Naive thymus-derived CD8-positive, alpha-beta T cell (primary cell): ENCODE measurements at regions of chr11 and their contacts with region 1.

Region 1: GRCh38 chr11:34105079-34105956 is at the start of gene NAT10:
- DNase-seq: peak; percentile 82 to 99 (median 97)
- ATAC-seq: peak; percentile 92 to 93
- H3K4me3 Mint-ChIP-seq: peak within 1 kb of the TSS; percentile 93 to 98 (median 96)
- H3K27ac Mint-ChIP-seq: peak within 1 kb of the TSS; percentile 98 to 99 (median 99)
- H3K4me1 Mint-ChIP-seq: peaks cover 37 to 65% (median 56%) of the 10 kb centered on the region in 4 donors
- H3K27me3 Mint-ChIP-seq: peaks cover 0 to 6% (median 0%) of the 10 kb centered on the region in 5 donors
- polyA plus RNA-seq, gene NAT10: 25.2 to 56.7 (median 41.9) TPM

Region 2: DNA sequence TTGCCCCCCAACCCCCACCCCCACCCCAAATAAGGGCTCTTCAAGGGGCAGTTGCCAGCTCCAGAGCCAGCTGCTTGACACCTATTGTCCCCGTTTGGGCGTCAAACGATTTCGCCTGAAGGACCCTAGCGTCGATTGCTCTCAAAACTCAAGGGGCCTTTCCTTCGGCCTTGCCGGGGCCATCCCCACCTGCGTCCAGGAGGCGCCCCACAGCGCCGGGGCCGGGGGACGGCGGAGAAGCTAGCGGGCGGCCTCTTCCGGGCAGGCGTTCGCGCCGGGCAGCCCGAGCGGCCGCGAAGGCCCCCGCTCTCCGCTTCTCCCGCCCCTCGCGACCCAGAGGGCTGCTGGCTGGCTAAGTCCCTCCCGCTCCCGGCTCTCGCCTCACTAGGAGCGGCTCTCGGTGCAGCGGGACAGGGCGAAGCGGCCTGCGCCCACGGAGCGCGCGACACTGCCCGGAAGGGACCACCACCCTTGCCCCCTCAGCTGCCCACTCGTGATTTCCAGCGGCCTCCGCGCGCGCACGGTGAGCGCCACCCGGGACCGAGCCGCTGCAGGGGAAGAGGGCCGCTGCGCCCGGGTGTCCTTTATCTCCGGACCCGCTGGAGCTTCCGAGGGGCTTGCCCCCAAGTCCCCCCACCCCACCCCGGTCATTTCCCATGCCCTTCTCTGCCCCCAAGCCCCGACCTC is 53.8 kb before region 1 on chr11 and contains the start of gene CAPRIN1:
- POLR2A ChIA-PET with region 1: interaction called, 102 read pairs
- DNase-seq: peak; percentile 71 to 96 (median 84)
- ATAC-seq: peak; percentile 76 to 78
- H3K4me3 Mint-ChIP-seq: peak within 1 kb of the TSS; percentile 94 to 99 (median 98)
- H3K27ac Mint-ChIP-seq: peak within 1 kb of the TSS; percentile 95 to 99 (median 98)
- H3K4me1 Mint-ChIP-seq: peaks cover 9 to 40% (median 25%) of the 10 kb centered on the region in 4 donors
- H3K27me3 Mint-ChIP-seq: no peaks in the 10 kb centered on the region
- polyA plus RNA-seq, gene CAPRIN1: 42.0 to 82.5 (median 57.1) TPM

Region 3: DNA sequence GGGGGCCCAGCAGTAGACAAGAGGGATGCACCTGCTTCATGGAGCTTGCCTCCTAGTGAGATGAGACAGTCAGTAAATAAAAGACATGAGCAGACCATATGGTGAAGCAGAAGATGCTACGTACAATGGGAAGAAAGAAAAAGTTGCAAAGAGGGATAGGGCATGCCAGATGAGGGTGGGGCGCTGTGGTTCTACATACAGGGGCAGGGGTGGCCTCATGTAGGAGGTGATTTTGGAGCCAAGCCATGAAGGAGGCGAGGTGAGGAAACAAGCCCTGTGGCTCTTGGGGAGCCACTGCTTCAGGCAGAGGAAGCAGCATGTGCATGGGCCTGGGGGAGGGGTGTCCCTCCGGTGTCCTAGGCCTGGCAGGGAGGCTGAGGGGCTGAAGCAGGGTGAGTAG is 15.3 kb after region 1 on chr11:
- POLR2A ChIA-PET with region 1: no interaction called
- DNase-seq: no peak
- ATAC-seq: no peak
- H3K4me3 Mint-ChIP-seq: no peak overlapping the region
- H3K27ac Mint-ChIP-seq: peak overlapping the region in 1 of 10 donors; percentile 67
- H3K4me1 Mint-ChIP-seq: peaks cover 0 to 11% (median 5%) of the 10 kb centered on the region in 4 donors
- H3K27me3 Mint-ChIP-seq: no peaks in the 10 kb centered on the region

Region 4: GRCh38 chr11:34149786-34150185 is 44.5 kb after region 1 on chr11:
- POLR2A ChIA-PET with region 1: no interaction called
- DNase-seq: peak in 1 of 10 donors; percentile 49
- ATAC-seq: no peak
- H3K4me3 Mint-ChIP-seq: no peak overlapping the region
- H3K27ac Mint-ChIP-seq: no peak overlapping the region
- H3K4me1 Mint-ChIP-seq: peaks cover 11 to 22% (median 14%) of the 10 kb centered on the region in 4 donors
- H3K27me3 Mint-ChIP-seq: no peaks in the 10 kb centered on the region

Region 5: DNA sequence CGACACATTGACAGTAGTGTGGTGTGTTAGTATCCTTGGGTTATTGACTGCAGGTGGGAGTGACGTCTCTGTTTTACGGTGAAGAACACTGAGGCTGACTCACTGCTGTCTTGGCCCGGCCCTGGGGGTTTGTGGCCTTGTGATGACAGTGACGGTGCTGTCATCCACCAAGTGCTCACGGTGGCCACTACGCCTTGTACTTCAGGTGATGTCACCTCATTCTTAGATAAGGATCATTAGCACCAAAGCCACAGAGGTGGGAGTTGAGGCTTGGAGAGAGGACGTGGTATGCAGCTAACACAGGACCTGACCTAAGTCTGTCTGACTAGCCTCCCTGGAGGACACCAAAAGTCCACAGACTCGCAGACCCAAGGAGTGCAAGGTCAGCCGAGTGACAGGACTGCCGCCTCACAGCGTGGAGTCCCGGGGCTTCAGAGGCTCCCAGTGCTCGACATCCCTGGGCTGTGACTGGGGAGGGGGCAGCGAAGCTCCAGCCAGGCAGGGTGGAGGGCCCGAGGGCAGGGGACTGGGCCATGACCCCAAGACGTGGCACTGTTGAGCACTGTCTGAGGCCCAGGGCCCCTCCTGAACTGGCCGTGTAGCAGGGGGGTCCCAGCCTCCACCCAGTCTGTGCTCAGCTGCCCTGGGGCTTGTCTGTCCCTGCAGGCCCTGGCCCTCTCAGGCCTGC is 56.6 kb after region 1 on chr11:
- POLR2A ChIA-PET with region 1: no interaction called
- DNase-seq: peak in 1 of 10 donors; percentile 12
- ATAC-seq: no peak
- H3K4me3 Mint-ChIP-seq: no peak overlapping the region
- H3K27ac Mint-ChIP-seq: no peak overlapping the region
- H3K4me1 Mint-ChIP-seq: peaks cover 10 to 21% (median 17%) of the 10 kb centered on the region in 4 donors
- H3K27me3 Mint-ChIP-seq: no peaks in the 10 kb centered on the region

Region 6: DNA sequence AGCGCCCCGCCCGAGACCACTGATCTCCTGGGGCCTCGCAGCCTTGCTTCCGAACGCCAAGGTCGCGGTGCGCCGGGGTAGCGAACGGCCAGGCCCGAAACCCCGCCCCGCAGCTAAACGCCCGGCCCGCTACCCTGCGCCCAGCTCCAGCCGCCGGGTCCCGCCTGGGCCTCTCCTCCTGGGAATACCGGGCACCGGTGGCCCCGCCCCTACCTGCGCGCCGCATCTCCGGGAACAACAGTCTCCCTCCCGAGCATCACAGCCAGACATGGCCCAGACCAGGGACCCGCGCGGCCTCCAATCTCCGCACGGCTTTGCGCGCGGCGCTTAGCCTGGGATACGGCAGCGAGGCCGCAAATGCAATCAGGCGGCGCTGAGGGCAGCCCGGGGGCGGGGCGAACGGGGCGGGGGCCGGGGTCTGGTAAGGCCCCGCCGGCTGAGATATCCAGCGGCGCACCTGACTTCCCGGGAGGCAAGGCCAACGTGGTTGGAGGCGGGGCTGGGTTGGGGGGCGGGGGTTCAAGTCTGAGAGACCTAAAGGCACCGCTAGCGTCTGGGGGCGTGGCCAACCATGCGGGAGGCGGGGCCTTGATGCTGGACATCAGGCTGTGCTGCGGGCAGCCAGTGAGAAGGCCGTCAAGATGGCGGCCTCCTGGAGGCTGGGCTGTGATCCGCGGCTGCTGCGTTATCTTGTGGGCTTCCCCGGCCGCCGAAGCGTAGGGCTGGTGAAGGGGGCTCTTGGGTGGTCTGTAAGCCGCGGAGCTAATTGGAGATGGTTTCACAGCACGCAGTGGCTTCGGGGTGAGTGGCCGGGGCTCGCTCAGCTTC is 810.9 kb after region 1 on chr11 and contains the starts of genes APIP and PDHX:
- POLR2A ChIA-PET with region 1: interaction called, 13 read pairs
- DNase-seq: peak; percentile 77 to 97 (median 86)
- ATAC-seq: peak; percentile 79 to 84
- H3K4me3 Mint-ChIP-seq: peak within 1 kb of the TSS; percentile 92 to 99 (median 98)
- H3K27ac Mint-ChIP-seq: peak within 1 kb of the TSS; percentile 93 to 99 (median 98)
- H3K4me1 Mint-ChIP-seq: peaks cover 28 to 64% (median 48%) of the 10 kb centered on the region in 4 donors
- H3K27me3 Mint-ChIP-seq: no peaks in the 10 kb centered on the region
- polyA plus RNA-seq, gene APIP: 15.1 to 17.4 (median 15.5) TPM
- polyA plus RNA-seq, gene PDHX: 14.3 to 15.4 (median 15.3) TPM